ENCODE measurements at regions of chr11 and their contacts with region 1.

Region 1: GRCh38 chr11:44036811-44037657 is 10.7 kb upstream of the ACCSL start:
- DNase-seq: peak; percentile 79
- ATAC-seq: peak; percentile 97
- H3K4me3 ChIP-seq: no peak overlapping the region
- H3K27ac ChIP-seq: no peak overlapping the region
- H3K4me1 ChIP-seq: no peaks in the 10 kb centered on the region
- H3K27me3 ChIP-seq: no peaks in the 10 kb centered on the region
- CTCF ChIP-seq: peak; percentile 84

Region 2: DNA sequence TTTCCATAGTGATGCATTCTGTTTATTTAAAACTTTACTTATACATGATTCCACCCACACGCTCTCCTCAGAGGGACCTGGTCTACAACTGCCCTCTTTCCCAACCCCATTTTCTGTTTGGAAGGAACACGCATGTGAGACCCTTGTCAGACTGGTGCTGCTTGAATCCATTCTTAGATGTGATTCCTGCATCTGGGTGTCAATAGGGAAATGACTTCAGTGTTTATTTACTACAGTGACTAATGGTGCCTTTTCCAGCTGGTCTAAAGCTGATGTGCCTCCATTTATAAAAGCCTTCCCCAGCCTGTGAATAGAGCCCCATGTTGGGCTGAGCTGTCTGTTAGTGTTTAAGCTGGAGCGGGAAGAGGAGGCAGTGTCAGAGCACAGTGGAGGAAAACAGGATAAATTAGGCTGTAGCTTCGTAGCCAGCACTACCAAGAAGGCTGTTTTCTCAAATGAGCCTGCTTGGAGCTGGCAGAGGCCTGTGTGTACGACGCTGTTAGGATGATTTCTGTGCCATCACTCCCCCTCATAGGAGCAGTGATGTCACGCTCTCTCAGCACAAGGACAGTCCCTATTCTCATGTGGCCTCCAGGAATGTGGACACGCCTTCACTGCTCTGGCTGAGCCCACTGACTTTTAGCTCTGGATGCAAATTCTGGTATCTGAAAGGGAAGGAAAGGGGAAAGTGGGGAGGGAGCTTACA is 113.5 kb before region 1 on chr11:
- CTCF ChIA-PET with region 1: no interaction called
- POLR2A ChIA-PET with region 1: no interaction called
- intact Hi-C with region 1: loop called (anchors 1 kb)
- DNase-seq: peak; percentile 40
- ATAC-seq: peak; percentile 61
- H3K4me3 ChIP-seq: no peak overlapping the region
- H3K27ac ChIP-seq: peak overlapping the region; percentile 29
- H3K4me1 ChIP-seq: peaks cover 27% of the 10 kb centered on the region
- H3K27me3 ChIP-seq: no peaks in the 10 kb centered on the region
- CTCF ChIP-seq: no peak

Region 3: GRCh38 chr11:44286268-44286880 is 249.3 kb after region 1 on chr11:
- CTCF ChIA-PET with region 1: no interaction called
- POLR2A ChIA-PET with region 1: no interaction called
- intact Hi-C with region 1: no loop called
- DNase-seq: peak; percentile 70
- ATAC-seq: peak; percentile 60
- H3K4me3 ChIP-seq: no peak overlapping the region
- H3K27ac ChIP-seq: no peak overlapping the region
- H3K4me1 ChIP-seq: no peaks in the 10 kb centered on the region
- H3K27me3 ChIP-seq: no peaks in the 10 kb centered on the region
- CTCF ChIP-seq: peak; percentile 94